ACHN (cell line): ENCODE measurements at regions of chr17 and their contacts with region 1.

Region 1: GRCh38 chr17:78497115-78497540 is 80.1 kb downstream of the DNAH17 start:
- DNase-seq: peak; percentile 83

Region 2: DNA sequence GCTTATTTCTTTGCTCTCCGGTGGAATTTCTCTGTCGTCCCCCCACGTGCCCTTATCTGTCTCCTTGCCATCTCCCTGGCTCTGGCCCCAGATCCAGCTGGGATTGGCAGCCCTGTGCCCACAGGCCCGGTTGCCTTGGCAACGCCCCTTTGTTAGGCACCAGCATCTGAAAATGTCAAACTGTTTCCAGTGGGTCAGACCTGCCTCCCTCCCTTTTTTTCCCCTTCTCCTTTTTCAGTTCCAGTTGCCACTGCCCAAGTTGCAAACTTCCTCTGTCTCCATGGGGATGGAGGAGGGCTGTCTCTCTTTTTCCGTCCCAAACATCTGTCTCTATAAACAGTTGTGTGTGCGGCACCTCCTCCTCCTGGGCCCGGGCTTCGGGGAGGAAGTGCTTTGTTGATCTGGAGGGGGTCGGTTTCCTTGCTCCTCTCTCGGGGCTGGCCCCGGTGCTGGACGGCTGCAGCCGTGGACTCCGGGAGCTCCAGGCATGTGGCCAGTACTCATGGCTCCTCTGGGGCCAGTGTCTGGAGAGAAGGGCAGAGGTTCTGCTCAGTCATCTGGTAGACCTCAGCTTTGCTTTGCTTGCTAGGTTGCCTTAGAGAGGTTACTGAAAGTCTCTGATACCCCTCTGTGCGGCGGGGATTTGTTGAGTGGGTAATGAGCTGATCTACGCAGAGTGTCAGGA is 172.6 kb before region 1 on chr17:
- in situ Hi-C with region 1: no loop called
- DNase-seq: no peak

Region 3: GRCh38 chr17:78412403-78412802 is 84.7 kb before region 1 on chr17:
- in situ Hi-C with region 1: no loop called
- DNase-seq: peak; percentile 16

Region 4: DNA sequence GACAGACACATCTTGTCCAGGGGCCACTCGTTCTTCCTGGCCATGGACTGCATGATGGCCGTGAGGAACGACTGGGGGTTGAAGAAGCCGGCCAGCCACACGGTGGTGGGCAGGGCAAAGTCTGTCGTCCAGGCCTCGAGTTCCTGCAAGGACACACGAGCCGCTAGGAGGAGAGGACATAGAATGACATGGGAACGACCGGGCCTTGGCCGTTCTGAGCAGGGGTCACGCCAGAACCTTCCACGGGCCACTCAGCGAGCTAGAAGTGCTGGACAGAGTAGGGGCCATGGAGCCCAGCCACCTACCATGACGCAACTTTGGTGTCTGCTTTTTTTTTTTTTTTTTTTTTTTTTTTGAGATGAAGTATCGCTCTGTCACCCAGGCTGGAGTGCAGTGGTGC is 71.7 kb before region 1 on chr17:
- in situ Hi-C with region 1: no loop called
- DNase-seq: no peak

Region 5: GRCh38 chr17:78708510-78708973 is 211.4 kb after region 1 on chr17:
- in situ Hi-C with region 1: loop called (anchors 25 kb)
- DNase-seq: peak; percentile 84

Region 6: DNA sequence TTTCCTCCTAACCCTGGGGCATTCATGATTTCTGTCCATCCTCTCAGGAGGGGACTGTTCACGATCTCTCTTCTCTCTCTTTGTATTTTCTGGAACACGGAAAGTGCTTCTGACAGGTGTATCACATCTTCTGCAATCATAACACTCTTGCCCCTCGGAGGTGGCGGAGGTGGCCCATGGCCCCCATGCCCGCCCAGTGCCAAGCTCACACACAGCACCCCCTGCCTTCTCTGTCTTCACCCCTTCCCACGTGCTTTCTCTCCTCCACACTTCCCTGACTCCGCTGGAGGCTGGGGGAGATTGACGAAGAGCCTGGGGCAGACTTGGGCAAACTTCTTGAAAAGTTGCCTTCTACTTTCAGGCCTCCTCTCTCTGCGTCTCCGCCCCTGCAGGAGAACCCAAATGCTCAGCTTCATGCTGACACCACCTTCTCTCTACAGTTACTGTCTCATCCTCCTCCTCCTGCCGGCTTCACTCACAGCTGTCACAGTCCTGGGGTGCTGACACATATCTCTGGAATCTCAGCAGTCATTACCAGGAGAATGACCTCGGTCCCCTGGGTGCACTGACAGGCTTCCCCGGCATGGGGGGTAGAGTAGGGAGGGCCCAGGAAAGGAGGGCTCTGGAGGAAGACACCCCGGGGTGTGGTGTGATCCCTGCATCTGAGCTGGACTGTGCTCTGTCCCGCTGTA is 704.6 kb after region 1 on chr17:
- in situ Hi-C with region 1: no loop called
- DNase-seq: peak; percentile 92